Posterior vena cava (tissue), 2 donors: ENCODE measurements at regions of chr13 and their contacts with region 1.

Region 1: DNA sequence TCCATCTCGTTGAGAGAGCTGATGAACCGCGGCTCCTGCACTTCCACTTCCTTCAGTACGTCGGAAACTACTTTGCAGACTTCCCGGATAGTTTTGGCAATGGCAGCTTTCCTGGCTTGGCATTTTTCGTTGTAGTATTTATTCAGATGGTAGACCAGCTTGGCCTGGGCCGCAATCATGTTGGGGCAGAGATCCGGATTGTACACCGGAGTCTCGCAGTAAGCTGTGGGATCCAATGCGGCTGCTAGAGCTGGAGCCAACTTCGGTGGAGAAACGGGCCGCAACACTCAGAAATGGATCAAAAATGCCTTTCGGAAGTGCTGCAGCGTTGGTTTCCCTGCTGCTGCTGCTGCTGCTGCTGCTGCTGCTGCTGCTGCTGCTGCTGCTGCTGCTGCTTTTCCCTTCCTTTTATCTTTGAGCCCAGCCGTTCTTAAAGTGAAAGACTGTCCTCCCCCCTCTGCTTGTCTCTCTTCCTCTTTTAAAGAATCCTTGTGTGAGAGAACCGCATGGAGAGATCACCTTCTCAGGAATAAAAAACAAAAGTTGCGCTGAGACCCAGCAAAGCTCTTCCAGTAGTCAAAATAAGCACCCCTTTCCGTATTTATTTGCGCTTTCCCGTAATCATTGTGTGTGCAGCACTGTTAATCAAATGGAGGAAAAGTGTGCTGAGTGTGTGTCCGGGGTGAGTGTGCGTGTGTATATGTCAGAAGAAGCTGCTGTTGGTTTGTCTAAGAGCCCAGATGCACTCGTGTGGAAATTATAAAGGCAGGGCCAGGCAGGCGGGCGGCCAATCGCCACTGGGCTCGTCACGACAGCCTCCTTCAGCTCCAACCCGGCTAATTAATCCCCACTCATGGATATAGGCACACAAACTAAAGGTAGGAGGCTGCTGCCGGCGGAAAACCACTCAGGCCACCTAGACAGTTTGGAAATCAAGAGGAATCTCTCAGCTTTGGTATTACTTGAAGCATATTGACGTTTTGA is at the start of gene MAB21L1:
- DNase-seq: peak; percentile 72
- total RNA-seq, gene MAB21L1: 0.14 to 0.46 TPM

Region 2: DNA sequence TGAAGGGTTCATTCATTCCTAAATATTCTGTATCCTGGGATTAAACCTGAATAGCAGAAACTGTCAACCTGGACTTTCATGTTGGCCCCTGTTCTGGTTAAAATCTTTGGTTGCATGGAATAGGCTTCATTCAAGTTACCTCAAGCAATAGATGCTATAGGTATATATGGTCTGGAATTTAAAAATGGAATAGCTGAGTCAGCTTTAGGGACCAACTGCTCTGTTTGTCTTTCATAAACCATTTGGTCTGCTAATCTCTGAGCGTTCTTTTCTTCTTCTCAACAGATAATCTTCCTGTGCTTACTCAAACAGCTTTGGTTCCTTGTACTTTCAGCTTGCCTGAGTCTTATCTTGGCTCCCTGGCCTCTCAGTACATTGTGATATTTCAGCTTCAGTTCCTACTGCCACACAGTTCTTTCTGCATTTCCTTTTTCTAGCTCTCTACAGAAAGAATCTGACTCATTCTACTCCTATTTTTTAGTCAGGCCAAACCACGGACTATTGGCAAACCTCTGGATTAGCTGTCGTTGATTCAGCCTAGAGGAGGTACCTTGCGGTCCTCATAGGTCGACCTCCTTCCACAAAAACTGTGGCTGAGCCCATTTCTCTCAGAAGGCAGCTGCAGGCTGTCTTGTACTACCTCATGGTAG is 36.1 kb after region 1 on chr13:
- intact Hi-C with region 1: no loop called
- DNase-seq: no peak

Region 3: DNA sequence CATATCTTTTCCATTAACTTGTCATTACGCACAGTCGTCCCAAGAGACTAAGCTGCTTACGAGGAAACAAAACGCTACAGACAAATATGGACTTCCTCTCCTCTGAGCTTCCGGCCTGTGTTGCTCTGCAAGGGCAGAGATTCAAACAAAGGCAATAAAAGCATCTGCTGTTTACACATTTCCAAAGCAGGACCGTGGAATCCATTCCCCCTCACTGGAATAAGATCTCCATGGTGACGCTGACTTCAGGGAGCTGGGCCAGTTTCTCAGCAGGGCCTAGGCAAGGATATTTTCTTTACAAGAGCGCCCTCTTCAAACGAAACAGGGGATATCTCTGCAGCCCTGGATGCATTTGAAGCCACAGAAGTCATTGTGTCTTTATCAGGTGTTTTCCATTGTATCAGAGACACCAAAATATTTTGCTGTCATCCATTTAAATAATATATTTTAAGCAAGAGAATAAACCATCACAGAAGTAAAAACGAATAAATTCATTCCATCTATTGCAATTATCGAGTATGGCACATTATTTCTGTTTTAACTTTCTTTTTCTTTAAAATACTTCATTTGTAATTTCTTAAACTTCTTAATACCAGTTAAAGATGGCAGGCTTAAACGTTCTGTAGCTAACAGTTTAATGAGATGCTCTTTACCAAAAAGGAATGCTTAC is 477.4 kb after region 1 on chr13:
- intact Hi-C with region 1: loop called in 1 of 2 experiments (anchors 10 kb)
- DNase-seq: peak; percentile 87

Region 4: GRCh38 chr13:36057029-36057428 is 580.8 kb after region 1 on chr13:
- intact Hi-C with region 1: no loop called
- DNase-seq: no peak